Adrenal gland (tissue), 19 donors: ENCODE measurements at regions of chr9 and their contacts with region 1.

Region 1: GRCh38 chr9:105414947-105415661 is 32.7 kb upstream of the FSD1L start:
- DNase-seq: peak; percentile 42 to 76 (median 62)
- H3K4me3 ChIP-seq: no peak overlapping the region
- H3K27ac ChIP-seq: no peak overlapping the region
- H3K4me1 ChIP-seq: peaks cover 3 to 4% of the 10 kb centered on the region in 2 donors
- H3K27me3 ChIP-seq: no peaks in the 10 kb centered on the region
- CTCF ChIP-seq: peak; percentile 83 to 96 (median 92)
- POLR2A ChIP-seq: no peak

Region 2: GRCh38 chr9:104553261-104553660 is 861.8 kb before region 1 on chr9:
- intact Hi-C with region 1: no loop called
- DNase-seq: no peak
- H3K4me3 ChIP-seq: no peak overlapping the region
- H3K27ac ChIP-seq: no peak overlapping the region
- H3K4me1 ChIP-seq: no peaks in the 10 kb centered on the region
- H3K27me3 ChIP-seq: no peaks in the 10 kb centered on the region
- CTCF ChIP-seq: no peak
- POLR2A ChIP-seq: no peak

Region 3: GRCh38 chr9:105168870-105169319 is 246.2 kb before region 1 on chr9:
- intact Hi-C with region 1: loop called (anchors 5 kb)
- DNase-seq: no peak
- H3K4me3 ChIP-seq: no peak overlapping the region
- H3K27ac ChIP-seq: no peak overlapping the region
- H3K4me1 ChIP-seq: no peaks in the 10 kb centered on the region
- H3K27me3 ChIP-seq: no peaks in the 10 kb centered on the region
- CTCF ChIP-seq: no peak
- POLR2A ChIP-seq: no peak